ENCODE measurements at regions of chr9 and their contacts with region 1.

Region 1: DNA sequence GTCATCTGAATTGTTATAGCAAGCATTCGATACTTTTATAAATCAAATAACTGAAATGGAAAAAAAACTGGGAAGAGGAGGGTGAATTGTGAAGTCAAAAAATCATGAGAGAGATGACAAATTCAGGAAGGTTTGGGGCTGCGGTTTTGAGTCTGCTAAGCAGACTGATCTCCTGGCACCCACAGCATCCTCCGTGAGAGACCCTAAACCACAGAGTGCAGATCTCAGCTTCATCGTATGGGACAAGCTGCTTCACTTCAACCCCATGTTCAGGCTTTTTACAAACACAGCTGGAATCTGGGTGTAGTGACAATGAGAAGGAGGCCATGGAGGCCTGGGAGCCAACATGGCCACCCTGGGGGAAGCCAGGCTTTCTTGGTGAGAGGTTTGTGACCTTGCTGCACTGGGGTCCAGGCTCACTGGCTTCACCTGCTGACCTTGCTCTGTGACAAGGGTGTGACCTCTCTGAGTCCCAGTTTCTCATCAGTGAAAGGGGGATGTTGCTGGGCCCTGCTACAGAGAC is 19.4 kb downstream of the USP20 start:
- DNase-seq: no peak
- H3K4me3 ChIP-seq: no peak overlapping the region
- H3K27ac ChIP-seq: no peak overlapping the region
- H3K4me1 ChIP-seq: no peaks in the 10 kb centered on the region
- H3K27me3 ChIP-seq: no peaks in the 10 kb centered on the region
- CTCF ChIP-seq: no peak
- POLR2A ChIP-seq: no peak

Region 2: DNA sequence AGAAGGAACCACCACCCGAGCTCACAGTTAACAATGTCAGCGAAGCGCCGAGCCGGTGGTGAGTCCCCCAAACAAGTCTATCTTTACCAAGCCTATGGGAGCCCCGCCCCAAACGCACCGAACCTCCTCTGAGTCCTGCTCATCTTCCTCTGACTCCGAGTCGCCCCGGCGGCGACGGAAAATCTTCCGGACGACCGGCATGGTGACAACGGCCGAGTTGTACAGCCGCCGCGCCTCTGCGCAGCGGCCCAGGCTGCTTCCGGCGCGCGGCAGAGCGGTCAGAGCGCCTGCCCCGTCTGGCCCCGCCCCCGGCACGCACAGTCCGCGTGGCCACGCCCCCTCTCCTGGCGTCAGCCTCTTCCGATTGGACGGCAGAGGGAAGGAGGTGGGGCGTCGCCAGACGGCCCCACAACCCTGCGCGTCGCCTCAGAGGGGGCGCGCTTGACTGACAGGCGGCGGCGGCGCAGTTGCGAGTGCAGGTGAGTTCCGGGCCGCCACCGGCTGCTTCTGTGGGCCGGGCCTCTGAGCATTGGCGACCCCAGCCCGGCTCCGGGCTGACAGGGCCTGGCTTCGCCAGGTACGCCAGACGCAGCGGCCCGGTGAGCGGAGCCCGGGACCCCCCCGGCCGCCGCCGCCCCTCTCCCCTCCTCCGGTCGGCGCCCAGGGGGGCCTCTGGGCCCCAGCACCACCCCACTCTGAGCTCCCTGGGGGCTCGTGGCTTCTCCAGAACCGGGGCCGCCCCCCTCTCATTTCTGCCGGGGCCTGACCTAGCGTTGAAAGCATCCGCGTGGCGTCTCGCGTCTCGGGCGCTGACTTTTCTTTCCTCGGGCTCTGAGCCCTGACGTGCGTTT is 19.4 kb before region 1 on chr9 and contains the starts of genes C9orf78 and USP20:
- intact Hi-C with region 1: no loop called
- DNase-seq: peak; percentile 93 to 94
- H3K4me3 ChIP-seq: peak within 1 kb of the TSS; percentile 75 to 94 (median 80)
- H3K27ac ChIP-seq: peak within 1 kb of the TSS; percentile 86 to 92
- H3K4me1 ChIP-seq: peaks cover 0 to 12% of the 10 kb centered on the region in 2 donors
- H3K27me3 ChIP-seq: no peaks in the 10 kb centered on the region
- CTCF ChIP-seq: no peak
- POLR2A ChIP-seq: peak; percentile 91
- total RNA-seq, gene C9orf78: 56.7 to 189 (median 57.8) TPM
- total RNA-seq, gene USP20: 15.0 to 30.9 (median 22.3) TPM

Region 3: DNA sequence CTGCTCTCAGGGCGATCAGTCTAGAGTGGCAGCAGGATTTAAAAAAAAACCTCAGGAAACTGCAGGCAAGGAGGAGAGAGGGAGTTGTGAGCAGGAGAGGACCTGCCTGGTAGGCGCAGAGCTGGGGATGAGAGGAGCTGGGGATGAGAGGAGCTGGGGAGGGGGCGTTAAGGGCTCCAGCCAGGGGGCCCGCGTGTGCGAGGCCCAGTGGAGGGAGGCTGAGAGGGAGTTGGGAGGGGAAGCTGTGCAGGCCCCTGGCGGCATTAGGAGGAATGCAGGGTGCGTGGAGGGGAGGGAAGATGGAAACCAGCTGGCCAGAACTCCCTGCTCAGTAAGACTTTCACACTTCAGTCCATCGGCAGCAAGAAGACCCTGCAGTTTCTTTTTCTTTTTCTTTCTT is 365.7 kb after region 1 on chr9:
- intact Hi-C with region 1: loop called (anchors 5 kb)
- DNase-seq: no peak
- H3K4me3 ChIP-seq: no peak overlapping the region
- H3K27ac ChIP-seq: no peak overlapping the region
- H3K4me1 ChIP-seq: no peaks in the 10 kb centered on the region
- H3K27me3 ChIP-seq: no peaks in the 10 kb centered on the region
- CTCF ChIP-seq: no peak
- POLR2A ChIP-seq: no peak

Measured in breast epithelium (tissue), 4 donors.